Panc1 (cell line): ENCODE measurements at regions of chr6 and their contacts with region 1.

Region 1: DNA sequence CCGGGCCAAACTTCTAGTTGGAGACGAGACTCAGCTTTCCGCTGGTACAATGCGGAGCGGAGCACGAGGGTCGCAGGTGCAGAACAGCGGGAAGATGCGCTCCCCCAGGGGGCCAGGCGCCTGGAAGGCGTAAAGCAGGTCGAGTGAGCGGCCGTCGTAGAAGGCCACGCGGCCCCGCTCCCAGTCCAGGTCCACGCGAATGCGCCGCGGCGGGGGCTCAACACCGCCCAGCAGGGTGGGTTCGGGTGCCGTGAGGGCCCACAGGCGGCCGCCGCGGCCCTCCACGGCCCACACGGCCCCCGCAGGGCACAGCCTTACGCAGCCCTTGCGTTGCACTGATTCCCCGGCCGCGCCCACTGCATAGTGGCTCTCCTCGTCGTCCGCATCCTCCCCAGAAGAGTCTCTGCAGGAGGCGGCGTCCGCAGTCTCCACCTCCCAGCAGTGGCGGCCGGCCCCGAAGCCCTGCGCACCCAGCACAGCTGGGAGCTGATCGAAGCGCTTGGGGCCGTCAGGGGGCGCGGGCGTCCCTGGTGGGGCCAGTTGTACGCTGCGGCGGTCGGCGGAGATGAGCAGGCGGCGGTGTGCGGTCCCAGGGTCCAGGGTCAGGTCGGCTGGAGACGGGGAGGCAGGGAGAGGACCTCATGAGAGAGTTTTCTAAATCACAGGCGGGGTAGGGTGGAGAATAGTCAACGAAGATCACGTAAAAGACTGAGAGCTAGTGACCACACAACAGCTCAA is 4.3 kb downstream of the PPP1R11 start:
- DNase-seq: no peak
- ATAC-seq: no peak
- H3K4me3 ChIP-seq: no peak overlapping the region
- H3K27ac ChIP-seq: no peak overlapping the region
- H3K4me1 ChIP-seq: peaks cover 12% of the 10 kb centered on the region
- H3K27me3 ChIP-seq: peaks cover under 1% of the 10 kb centered on the region; the same call in 1 of the 2 replicates
- CTCF ChIP-seq: no peak

Region 2: DNA sequence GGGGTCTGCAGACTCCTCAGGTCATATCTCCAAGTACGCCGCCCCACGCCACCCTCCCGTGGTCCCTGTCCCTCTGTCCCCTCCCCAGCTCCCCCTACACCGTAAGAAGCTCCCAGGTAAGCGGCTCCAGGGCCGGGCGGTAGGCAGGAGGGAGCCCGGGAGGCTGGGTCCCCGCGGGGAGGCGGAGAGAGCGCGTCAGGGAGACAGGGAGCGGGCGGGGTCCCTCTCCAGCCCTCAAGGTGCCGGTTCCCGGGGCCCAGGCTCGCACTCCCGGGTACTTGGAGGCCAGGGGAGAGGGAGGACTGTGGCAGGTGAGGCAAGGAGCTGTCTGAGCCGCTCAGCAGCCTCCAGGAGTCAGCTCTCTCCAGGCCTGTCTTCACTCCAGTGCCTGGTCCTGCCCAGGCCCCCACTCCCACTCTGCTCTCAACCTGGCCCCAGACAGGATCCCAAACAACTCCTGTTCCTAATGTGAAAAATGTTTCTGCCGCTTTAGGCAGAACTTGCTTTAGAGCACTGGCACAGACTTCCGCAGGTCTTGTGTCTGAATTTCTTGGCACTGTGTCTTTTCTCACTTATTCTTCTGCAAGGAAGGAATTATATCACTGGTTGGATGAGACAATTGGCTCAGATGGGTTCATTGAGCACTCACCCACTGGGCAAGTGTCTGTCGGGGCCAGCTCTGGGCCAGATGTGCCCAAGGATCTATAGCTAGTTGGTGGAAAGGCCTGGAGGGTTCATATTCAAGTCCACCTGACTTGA is 207.0 kb before region 1 on chr6:
- CTCF ChIA-PET with region 1: no interaction called
- POLR2A ChIA-PET with region 1: interaction called, 15 read pairs
- in situ Hi-C with region 1: no loop called
- intact Hi-C with region 1: no loop called
- DNase-seq: no peak
- ATAC-seq: no peak
- H3K4me3 ChIP-seq: no peak overlapping the region
- H3K27ac ChIP-seq: no peak overlapping the region
- H3K4me1 ChIP-seq: no peaks in the 10 kb centered on the region
- H3K27me3 ChIP-seq: no peaks in the 10 kb centered on the region
- CTCF ChIP-seq: no peak